OCI-LY7 (cell line): ENCODE measurements at regions of chr10 and their contacts with region 1.

Region 1: GRCh38 chr10:125822878-125823662 is at the starts of genes BCCIP and UROS:
- DNase-seq: peak; percentile 96
- H3K4me3 ChIP-seq: peak within 1 kb of the TSS; percentile 77
- H3K27ac ChIP-seq: peak within 1 kb of the TSS; percentile 53
- H3K4me1 ChIP-seq: peaks cover 32% of the 10 kb centered on the region
- CTCF ChIP-seq: no peak
- total RNA-seq, gene BCCIP: 59.1 and 61.4 TPM in 2 replicates
- total RNA-seq, gene UROS: 37.3 and 39.7 TPM in 2 replicates

Region 2: DNA sequence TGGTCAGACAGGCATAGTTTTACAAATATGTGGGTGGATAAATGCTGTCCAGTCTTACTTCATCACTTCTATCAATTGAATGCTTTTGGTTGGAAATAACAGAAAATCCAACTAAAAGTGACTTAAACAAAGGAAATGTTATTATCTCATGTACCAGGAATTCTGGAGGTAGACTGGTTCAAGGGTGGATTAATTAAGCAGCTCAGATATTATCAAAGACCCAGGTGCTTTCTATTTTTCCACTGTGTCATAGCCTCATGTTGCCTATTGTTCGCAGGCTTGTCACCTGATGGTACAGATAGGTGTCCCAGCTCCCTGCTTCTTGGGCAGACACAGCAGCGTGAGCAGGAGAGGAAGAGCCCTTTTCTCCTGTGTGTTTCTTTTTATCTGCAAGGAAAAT is 506.6 kb before region 1 on chr10:
- CTCF ChIA-PET with region 1: no interaction called
- POLR2A ChIA-PET with region 1: no interaction called
- intact Hi-C with region 1: no loop called
- DNase-seq: no peak
- H3K4me3 ChIP-seq: no peak overlapping the region
- H3K27ac ChIP-seq: no peak overlapping the region
- H3K4me1 ChIP-seq: no peaks in the 10 kb centered on the region
- CTCF ChIP-seq: no peak

Region 3: GRCh38 chr10:125756196-125756595 is 66.9 kb before region 1 on chr10:
- CTCF ChIA-PET with region 1: no interaction called
- POLR2A ChIA-PET with region 1: no interaction called
- intact Hi-C with region 1: loop called (anchors 5 kb)
- DNase-seq: no peak
- H3K4me3 ChIP-seq: no peak overlapping the region
- H3K27ac ChIP-seq: no peak overlapping the region
- H3K4me1 ChIP-seq: no peaks in the 10 kb centered on the region
- CTCF ChIP-seq: no peak